H1 (cell line): ENCODE measurements at regions of chr7 and their contacts with region 1.

Region 1: GRCh38 chr7:20798081-20798693 is 11.5 kb upstream of the SP8 start:
- DNase-seq: peak in 1 of 2 experiments; percentile 82
- H3K4me3 ChIP-seq: peak overlapping the region; percentile 47 to 76 (median 74)
- H3K27ac ChIP-seq: peak overlapping the region; percentile 23; the same call in 1 of the 2 replicates
- H3K4me1 ChIP-seq: peaks cover 9 to 27% (median 17%) of the 10 kb centered on the region in 4 experiments; a peak in 6 of 7 replicates
- H3K27me3 ChIP-seq: peaks cover 4 to 21% (median 16%) of the 10 kb centered on the region in 4 experiments; a peak in 6 of 7 replicates
- CTCF ChIP-seq: no peak
- EP300 ChIP-seq: no peak
- POLR2A ChIP-seq: no peak; a peak in 1 of 3 replicates
- RAD21 ChIP-seq: no peak

Region 2: GRCh38 chr7:20778063-20778721 is 20.0 kb before region 1 on chr7:
- CTCF ChIA-PET with region 1: interaction called, 48 read pairs
- POLR2A ChIA-PET with region 1: interaction called, 192 read pairs
- DNase-seq: peak in 1 of 2 experiments; percentile 91
- H3K4me3 ChIP-seq: peak overlapping the region; percentile 27 to 62 (median 58)
- H3K27ac ChIP-seq: peak overlapping the region; percentile 11; the same call in 1 of the 2 replicates
- H3K4me1 ChIP-seq: peaks cover 11 to 29% (median 17%) of the 10 kb centered on the region in 4 experiments
- H3K27me3 ChIP-seq: peaks cover 4 to 13% (median 12%) of the 10 kb centered on the region in 4 experiments
- CTCF ChIP-seq: peak; percentile 78 to 87 (median 85)
- EP300 ChIP-seq: no peak
- POLR2A ChIP-seq: 0 out of 3 replicates have a peak, but pooled peaks of 1 of the 2 experiments have one; percentile 24
- RAD21 ChIP-seq: peak; percentile 87 to 90

Region 3: GRCh38 chr7:20783700-20784387 is 14.3 kb before region 1 on chr7:
- CTCF ChIA-PET with region 1: interaction called, 48 read pairs
- POLR2A ChIA-PET with region 1: interaction called, 192 read pairs
- DNase-seq: peak in 1 of 2 experiments; percentile 64
- H3K4me3 ChIP-seq: peak overlapping the region; percentile 61 to 87 (median 76)
- H3K27ac ChIP-seq: peak overlapping the region; percentile 32; the same call in 1 of the 2 replicates
- H3K4me1 ChIP-seq: peaks cover 5 to 26% (median 15%) of the 10 kb centered on the region in 4 experiments
- H3K27me3 ChIP-seq: peaks cover 0 to 25% (median 11%) of the 10 kb centered on the region in 4 experiments; a peak in 5 of 7 replicates
- CTCF ChIP-seq: peak in 1 of 3 experiments; percentile 10; a peak in 1 of 4 replicates
- EP300 ChIP-seq: no peak
- POLR2A ChIP-seq: peak in 1 of 2 experiments; percentile 21; a peak in 1 of 3 replicates
- RAD21 ChIP-seq: no peak

Region 4: DNA sequence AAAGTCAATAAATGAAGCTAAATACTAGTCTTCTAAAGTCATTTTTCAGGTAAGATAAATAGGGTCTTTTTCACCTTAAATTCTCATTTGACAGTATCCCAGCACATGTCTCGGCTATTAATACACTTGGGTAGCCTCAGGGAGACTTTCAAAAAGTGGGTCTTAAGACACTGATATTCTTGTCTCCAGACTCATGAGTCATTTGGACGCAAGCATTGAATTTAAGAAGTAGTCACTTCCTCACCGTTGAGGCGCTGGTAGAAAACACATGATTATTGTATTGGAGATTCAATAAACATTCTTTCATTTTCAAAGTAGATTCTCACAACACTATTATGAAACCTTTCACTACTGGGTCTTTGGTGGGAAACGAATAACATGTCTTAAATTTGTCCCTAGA is 97.4 kb after region 1 on chr7:
- CTCF ChIA-PET with region 1: no interaction called
- POLR2A ChIA-PET with region 1: no interaction called
- DNase-seq: no peak
- H3K4me3 ChIP-seq: no peak overlapping the region
- H3K27ac ChIP-seq: no peak overlapping the region
- H3K4me1 ChIP-seq: no peaks in the 10 kb centered on the region
- H3K27me3 ChIP-seq: no peaks in the 10 kb centered on the region
- CTCF ChIP-seq: no peak
- EP300 ChIP-seq: no peak
- POLR2A ChIP-seq: no peak
- RAD21 ChIP-seq: no peak